Body of pancreas (tissue), 4 donors: ENCODE measurements at regions of chr19 and their contacts with region 1.

Region 1: GRCh38 chr19:46840136-46840942 is 10.3 kb downstream of the AP2S1 start:
- DNase-seq: peak; percentile 57 to 64 (median 60)
- ATAC-seq: peak; percentile 65
- H3K4me3 ChIP-seq: no peak overlapping the region
- H3K27ac ChIP-seq: no peak overlapping the region
- H3K4me1 ChIP-seq: peaks cover 7% of the 10 kb centered on the region
- H3K27me3 ChIP-seq: no peaks in the 10 kb centered on the region
- CTCF ChIP-seq: peak; percentile 61 to 95 (median 75)
- POLR2A ChIP-seq: no peak

Region 2: GRCh38 chr19:46730953-46731501 is 109.3 kb before region 1 on chr19:
- intact Hi-C with region 1: no loop called
- DNase-seq: peak in 1 of 4 donors; percentile 65
- ATAC-seq: no peak
- H3K4me3 ChIP-seq: no peak overlapping the region
- H3K27ac ChIP-seq: peak overlapping the region in 1 of 4 donors; percentile 12
- H3K4me1 ChIP-seq: no peaks in the 10 kb centered on the region
- H3K27me3 ChIP-seq: no peaks in the 10 kb centered on the region
- CTCF ChIP-seq: no peak
- POLR2A ChIP-seq: peak in 1 of 3 donors; percentile 14

Region 3: GRCh38 chr19:46759817-46760333 is 80.5 kb before region 1 on chr19:
- intact Hi-C with region 1: loop called (anchors 5 kb)
- DNase-seq: peak in 2 of 4 donors; percentile 25 to 54
- ATAC-seq: peak; percentile 21
- H3K4me3 ChIP-seq: no peak overlapping the region
- H3K27ac ChIP-seq: no peak overlapping the region
- H3K4me1 ChIP-seq: peaks cover 22% of the 10 kb centered on the region
- H3K27me3 ChIP-seq: no peaks in the 10 kb centered on the region
- CTCF ChIP-seq: no peak
- POLR2A ChIP-seq: no peak